Left ventricle myocardium inferior (tissue), 1 donor: ENCODE measurements at regions of chr1 and their contacts with region 1.

Region 1: DNA sequence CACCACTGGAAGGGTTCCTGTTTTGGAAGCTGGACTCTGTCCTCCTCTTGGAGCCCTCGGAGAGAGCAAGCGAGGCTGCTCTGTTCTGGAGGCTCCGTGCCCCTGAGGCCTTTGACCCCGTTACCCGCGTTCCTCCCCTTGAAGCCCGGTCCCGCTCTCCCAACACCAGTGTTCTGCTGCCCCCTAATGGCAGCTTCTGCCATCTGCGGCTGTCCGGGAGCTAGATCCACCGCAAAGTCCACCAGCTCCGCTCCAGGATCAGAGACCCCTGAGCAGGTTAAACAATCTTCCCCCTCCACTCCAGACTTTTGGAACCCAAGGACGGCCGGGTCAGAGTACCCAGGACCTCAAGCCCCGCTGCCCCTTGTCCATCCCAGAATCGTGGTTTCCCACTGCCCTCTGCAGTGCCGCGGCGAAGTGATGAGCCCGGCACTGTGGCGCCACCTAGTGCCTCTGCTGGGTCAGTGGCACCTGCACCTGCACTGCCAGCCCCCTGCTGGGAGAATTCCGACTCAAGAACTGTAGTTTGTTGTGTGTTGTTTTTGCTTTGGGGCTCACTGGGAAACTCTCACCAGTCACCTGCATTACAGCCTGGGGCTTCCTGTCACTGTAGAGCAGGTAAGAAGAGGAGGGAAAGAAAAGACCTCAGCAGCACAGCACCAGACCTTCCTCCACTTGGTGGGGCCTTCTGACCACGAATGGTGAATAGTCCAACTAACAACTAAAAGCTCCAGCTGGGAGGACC is 63.5 kb upstream of the NFASC start:
- DNase-seq: peak; percentile 77
- H3K4me3 ChIP-seq: peak overlapping the region; percentile 64
- H3K27ac ChIP-seq: no peak overlapping the region
- H3K4me1 ChIP-seq: no peaks in the 10 kb centered on the region
- H3K27me3 ChIP-seq: peaks cover 3% of the 10 kb centered on the region
- CTCF ChIP-seq: peak; percentile 96

Region 2: GRCh38 chr1:204726478-204726877 is 80.6 kb before region 1 on chr1:
- intact Hi-C with region 1: no loop called
- DNase-seq: no peak
- H3K4me3 ChIP-seq: no peak overlapping the region
- H3K27ac ChIP-seq: no peak overlapping the region
- H3K4me1 ChIP-seq: no peaks in the 10 kb centered on the region
- H3K27me3 ChIP-seq: peaks cover 98% of the 10 kb centered on the region
- CTCF ChIP-seq: no peak

Region 3: DNA sequence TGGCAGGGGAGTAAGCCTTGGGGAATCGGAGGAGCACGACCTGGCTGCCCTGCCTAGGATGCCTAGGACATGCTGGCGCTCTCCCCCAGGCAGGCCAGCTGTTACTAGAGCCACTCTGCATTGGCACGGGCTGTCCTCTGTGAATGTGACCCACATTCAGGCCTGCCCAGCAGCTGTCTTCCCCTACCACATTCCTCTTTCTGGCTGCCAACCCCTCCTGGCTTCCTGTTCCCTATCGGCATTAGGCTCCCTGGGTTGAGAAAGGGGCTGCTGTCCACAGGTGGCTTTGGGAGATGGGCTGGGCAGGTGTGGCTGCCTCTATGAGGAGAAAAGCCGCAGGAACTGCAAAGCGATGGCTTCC is 61.2 kb after region 1 on chr1:
- intact Hi-C with region 1: no loop called
- DNase-seq: peak; percentile 46
- H3K4me3 ChIP-seq: no peak overlapping the region
- H3K27ac ChIP-seq: peak overlapping the region; percentile 67
- H3K4me1 ChIP-seq: peaks cover 53% of the 10 kb centered on the region
- H3K27me3 ChIP-seq: no peaks in the 10 kb centered on the region
- CTCF ChIP-seq: no peak

Region 4: GRCh38 chr1:204941421-204942338 is 134.6 kb after region 1 on chr1:
- intact Hi-C with region 1: loop called (anchors 5 kb)
- DNase-seq: peak; percentile 68
- H3K4me3 ChIP-seq: no peak overlapping the region
- H3K27ac ChIP-seq: no peak overlapping the region
- H3K4me1 ChIP-seq: peaks cover 9% of the 10 kb centered on the region
- H3K27me3 ChIP-seq: peaks cover 11% of the 10 kb centered on the region
- CTCF ChIP-seq: peak; percentile 95